K562 (cell line): ENCODE measurements at regions of chr12 and their contacts with region 1.

Region 1: GRCh38 chr12:53065975-53066931 is 12.9 kb downstream of the SPRYD3 start:
- DNase-seq: peak; percentile 80 to 86 (median 82)
- ATAC-seq: peak; percentile 87
- H3K4me3 ChIP-seq: no peak overlapping the region
- H3K27ac ChIP-seq: no peak overlapping the region; the same call in 2 of the 3 replicates
- H3K4me1 ChIP-seq: peaks cover 10 to 17% of the 10 kb centered on the region in 2 experiments; a peak in 4 of 5 replicates
- H3K27me3 ChIP-seq: no peaks in the 10 kb centered on the region; a peak in 1 of 5 replicates
- CTCF ChIP-seq: peak; percentile 87 to 93 (median 91)
- EP300 ChIP-seq: no peak
- POLR2A ChIP-seq: no peak
- RAD21 ChIP-seq: peak; percentile 84 to 94

Region 2: DNA sequence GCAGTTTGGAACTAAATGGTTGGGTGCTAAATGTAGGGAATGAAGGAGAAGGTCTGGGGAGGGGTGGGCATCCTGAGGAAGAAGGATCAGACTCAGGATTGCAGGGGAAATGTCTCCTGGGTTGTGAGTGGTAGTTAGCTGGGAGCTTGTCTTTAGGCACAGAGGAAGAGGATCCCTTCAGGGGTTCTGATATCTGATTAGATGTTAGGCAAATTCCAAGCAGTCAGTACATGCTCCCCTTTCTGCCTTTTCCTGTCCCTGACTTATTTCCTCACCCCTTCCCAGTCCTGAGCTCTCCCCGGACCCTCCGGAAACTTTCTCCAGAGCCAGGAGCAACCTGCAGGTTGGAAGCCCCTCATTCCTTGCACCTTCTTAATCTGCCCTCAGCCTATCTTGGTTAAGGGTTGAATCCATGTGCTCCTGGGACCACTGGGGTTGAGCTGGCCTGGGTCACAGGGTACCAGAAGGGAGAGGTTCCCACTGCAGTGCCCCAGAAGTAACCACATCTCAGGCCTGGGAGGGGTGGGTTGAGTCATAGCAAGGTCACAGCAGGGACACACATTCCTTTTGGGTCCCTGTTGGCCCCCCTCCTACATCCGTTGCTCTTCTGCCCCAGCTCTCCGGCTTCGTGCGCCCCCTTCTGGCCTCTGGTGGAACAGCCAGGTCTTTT is 32.9 kb after region 1 on chr12:
- CTCF ChIA-PET with region 1: interaction called, 49 read pairs
- POLR2A ChIA-PET with region 1: interaction called, 6 read pairs
- in situ Hi-C with region 1: loop called (anchors 5 kb)
- intact Hi-C with region 1: loop called (anchors 1 kb)
- DNase-seq: peak; percentile 94 to 96 (median 96)
- ATAC-seq: peak; percentile 88
- H3K4me3 ChIP-seq: no peak overlapping the region
- H3K27ac ChIP-seq: peak overlapping the region; percentile 72
- H3K4me1 ChIP-seq: peaks cover 39 to 47% of the 10 kb centered on the region in 2 experiments
- H3K27me3 ChIP-seq: no peaks in the 10 kb centered on the region; a peak in 1 of 5 replicates
- CTCF ChIP-seq: peak; percentile 94 to 96 (median 94)
- EP300 ChIP-seq: peak; percentile 49; the same call in 1 of the 2 replicates
- POLR2A ChIP-seq: no peak
- RAD21 ChIP-seq: peak; percentile 90 to 94

Region 3: GRCh38 chr12:53159195-53159839 is 93.1 kb after region 1 on chr12:
- CTCF ChIA-PET with region 1: no interaction called
- POLR2A ChIA-PET with region 1: interaction called, 4 read pairs
- in situ Hi-C with region 1: no loop called
- intact Hi-C with region 1: loop called (anchors 2 kb)
- DNase-seq: peak; percentile 90 to 94 (median 92)
- ATAC-seq: peak; percentile 97
- H3K4me3 ChIP-seq: no peak overlapping the region
- H3K27ac ChIP-seq: peak overlapping the region; percentile 54; the same call in 2 of the 3 replicates
- H3K4me1 ChIP-seq: peaks cover 11 to 16% of the 10 kb centered on the region in 2 experiments; a peak in 4 of 5 replicates
- H3K27me3 ChIP-seq: no peaks in the 10 kb centered on the region
- CTCF ChIP-seq: peak; percentile 97 to 99 (median 97)
- EP300 ChIP-seq: peak; percentile 56; the same call in 1 of the 2 replicates
- POLR2A ChIP-seq: no peak
- RAD21 ChIP-seq: peak; percentile 76 to 89

Region 4: GRCh38 chr12:53190108-53190729 is 124.0 kb after region 1 on chr12:
- CTCF ChIA-PET with region 1: no interaction called
- POLR2A ChIA-PET with region 1: interaction called, 5 read pairs
- in situ Hi-C with region 1: no loop called
- intact Hi-C with region 1: loop called (anchors 1 kb)
- DNase-seq: peak; percentile 65 to 80 (median 77)
- ATAC-seq: peak; percentile 94
- H3K4me3 ChIP-seq: no peak overlapping the region
- H3K27ac ChIP-seq: no peak overlapping the region
- H3K4me1 ChIP-seq: peaks cover 0 to 6% of the 10 kb centered on the region in 2 experiments; a peak in 3 of 5 replicates
- H3K27me3 ChIP-seq: no peaks in the 10 kb centered on the region
- CTCF ChIP-seq: peak; percentile 77 to 93 (median 88)
- EP300 ChIP-seq: no peak
- POLR2A ChIP-seq: peak; percentile 30; the same call in 1 of the 2 replicates
- RAD21 ChIP-seq: peak; percentile 50 to 73

Region 5: GRCh38 chr12:53205747-53206419 is 139.6 kb after region 1 on chr12:
- CTCF ChIA-PET with region 1: no interaction called
- POLR2A ChIA-PET with region 1: no interaction called
- in situ Hi-C with region 1: loop called (anchors 10 kb)
- intact Hi-C with region 1: no loop called
- DNase-seq: peak in 2 of 4 experiments; percentile 32 to 44
- ATAC-seq: peak; percentile 33; the same call in 2 of the 3 replicates
- H3K4me3 ChIP-seq: no peak overlapping the region
- H3K27ac ChIP-seq: no peak overlapping the region
- H3K4me1 ChIP-seq: peaks cover 21 to 24% of the 10 kb centered on the region in 2 experiments; a peak in 3 of 5 replicates
- H3K27me3 ChIP-seq: no peaks in the 10 kb centered on the region
- CTCF ChIP-seq: no peak
- EP300 ChIP-seq: no peak
- POLR2A ChIP-seq: no peak
- RAD21 ChIP-seq: no peak

Region 6: GRCh38 chr12:53287741-53288216 is 221.5 kb after region 1 on chr12:
- CTCF ChIA-PET with region 1: no interaction called
- POLR2A ChIA-PET with region 1: no interaction called
- in situ Hi-C with region 1: loop called (anchors 5 kb)
- intact Hi-C with region 1: no loop called
- DNase-seq: peak; percentile 67 to 78 (median 74)
- ATAC-seq: peak; percentile 96
- H3K4me3 ChIP-seq: no peak overlapping the region
- H3K27ac ChIP-seq: no peak overlapping the region
- H3K4me1 ChIP-seq: peaks cover 0 to 6% of the 10 kb centered on the region in 2 experiments; a peak in 1 of 5 replicates
- H3K27me3 ChIP-seq: no peaks in the 10 kb centered on the region
- CTCF ChIP-seq: peak; percentile 79 to 89 (median 83)
- EP300 ChIP-seq: no peak
- POLR2A ChIP-seq: no peak
- RAD21 ChIP-seq: peak; percentile 89 to 93

Region 7: GRCh38 chr12:53500776-53501614 is 434.7 kb after region 1 on chr12 and contains the start of gene TARBP2:
- CTCF ChIA-PET with region 1: no interaction called
- POLR2A ChIA-PET with region 1: no interaction called
- in situ Hi-C with region 1: no loop called
- intact Hi-C with region 1: loop called (anchors 10 kb)
- DNase-seq: peak; percentile 85 to 98 (median 88)
- ATAC-seq: peak; percentile 86
- H3K4me3 ChIP-seq: peak within 1 kb of the TSS; percentile 79
- H3K27ac ChIP-seq: peak within 1 kb of the TSS; percentile 97
- H3K4me1 ChIP-seq: peaks cover 33 to 47% of the 10 kb centered on the region in 2 experiments; a peak in 4 of 5 replicates
- H3K27me3 ChIP-seq: no peaks in the 10 kb centered on the region
- CTCF ChIP-seq: no peak
- EP300 ChIP-seq: no peak
- POLR2A ChIP-seq: peak; percentile 96
- RAD21 ChIP-seq: no peak
- polyA plus RNA-seq, gene TARBP2: 5.6 to 16.6 TPM